CD8-positive, alpha-beta T cell (primary cell): ENCODE measurements at regions of chr2 and their contacts with region 1.

Region 1: GRCh38 chr2:127701193-127701650 is at the start of gene SFT2D3:
- DNase-seq: peak; percentile 80 to 95 (median 89)
- ATAC-seq: peak; percentile 72
- H3K4me3 ChIP-seq: peak within 1 kb of the TSS; percentile 75 to 98
- H3K4me3 Mint-ChIP-seq: peak within 1 kb of the TSS; percentile 93
- H3K27ac ChIP-seq: peak within 1 kb of the TSS; percentile 92 to 96
- H3K27ac Mint-ChIP-seq: peak within 1 kb of the TSS; percentile 99
- H3K4me1 ChIP-seq: peaks cover 39% of the 10 kb centered on the region
- H3K4me1 Mint-ChIP-seq: peaks cover 46% of the 10 kb centered on the region
- H3K27me3 ChIP-seq: no peaks in the 10 kb centered on the region
- H3K27me3 Mint-ChIP-seq: no peaks in the 10 kb centered on the region
- CTCF ChIP-seq: no peak
- total RNA-seq, gene SFT2D3: 8.2 to 8.5 TPM

Region 2: GRCh38 chr2:127081826-127082633 is 619.2 kb before region 1 on chr2:
- CTCF ChIA-PET with region 1: no interaction called
- POLR2A ChIA-PET with region 1: no interaction called
- intact Hi-C with region 1: loop called (anchors 5 to 10 kb)
- DNase-seq: peak; percentile 67 to 94 (median 82)
- ATAC-seq: peak; percentile 66
- H3K4me3 ChIP-seq: peak overlapping the region; percentile 84 to 94
- H3K4me3 Mint-ChIP-seq: peak overlapping the region; percentile 90
- H3K27ac ChIP-seq: peak overlapping the region; percentile 94 to 96
- H3K27ac Mint-ChIP-seq: peak overlapping the region; percentile 99
- H3K4me1 ChIP-seq: peaks cover 94% of the 10 kb centered on the region
- H3K4me1 Mint-ChIP-seq: peaks cover 85% of the 10 kb centered on the region
- H3K27me3 ChIP-seq: no peaks in the 10 kb centered on the region
- H3K27me3 Mint-ChIP-seq: no peaks in the 10 kb centered on the region
- CTCF ChIP-seq: no peak

Region 3: GRCh38 chr2:127293748-127294562 is 407.3 kb before region 1 on chr2 and contains the start of gene ERCC3:
- CTCF ChIA-PET with region 1: no interaction called
- POLR2A ChIA-PET with region 1: interaction called, 5 read pairs
- intact Hi-C with region 1: loop called (anchors 5 to 10 kb)
- DNase-seq: peak; percentile 56 to 90 (median 83)
- ATAC-seq: peak; percentile 91
- H3K4me3 ChIP-seq: peak within 1 kb of the TSS; percentile 75 to 91
- H3K4me3 Mint-ChIP-seq: peak within 1 kb of the TSS; percentile 94
- H3K27ac ChIP-seq: peak within 1 kb of the TSS; percentile 74 to 76
- H3K27ac Mint-ChIP-seq: peak within 1 kb of the TSS; percentile 91
- H3K4me1 ChIP-seq: peaks cover 13% of the 10 kb centered on the region
- H3K4me1 Mint-ChIP-seq: peaks cover 45% of the 10 kb centered on the region
- H3K27me3 ChIP-seq: no peaks in the 10 kb centered on the region
- H3K27me3 Mint-ChIP-seq: no peaks in the 10 kb centered on the region
- CTCF ChIP-seq: no peak
- total RNA-seq, gene ERCC3: 43.2 to 46.4 TPM

Region 4: GRCh38 chr2:127597984-127598380 is 103.2 kb before region 1 on chr2:
- CTCF ChIA-PET with region 1: no interaction called
- POLR2A ChIA-PET with region 1: no interaction called
- intact Hi-C with region 1: no loop called
- DNase-seq: no peak
- ATAC-seq: no peak
- H3K4me3 ChIP-seq: no peak overlapping the region
- H3K4me3 Mint-ChIP-seq: no peak overlapping the region
- H3K27ac ChIP-seq: no peak overlapping the region
- H3K27ac Mint-ChIP-seq: no peak overlapping the region
- H3K4me1 ChIP-seq: no peaks in the 10 kb centered on the region
- H3K4me1 Mint-ChIP-seq: no peaks in the 10 kb centered on the region
- H3K27me3 ChIP-seq: no peaks in the 10 kb centered on the region
- H3K27me3 Mint-ChIP-seq: no peaks in the 10 kb centered on the region
- CTCF ChIP-seq: no peak

Region 5: GRCh38 chr2:127637725-127638252 is 63.4 kb before region 1 on chr2:
- CTCF ChIA-PET with region 1: interaction called, 4 read pairs
- POLR2A ChIA-PET with region 1: interaction called, 20 read pairs
- intact Hi-C with region 1: loop called (anchors 2 kb)
- DNase-seq: no peak
- ATAC-seq: no peak
- H3K4me3 ChIP-seq: peak overlapping the region in 1 of 2 experiments; percentile 15
- H3K4me3 Mint-ChIP-seq: peak overlapping the region; percentile 43
- H3K27ac ChIP-seq: no peak overlapping the region
- H3K27ac Mint-ChIP-seq: peak overlapping the region; percentile 89
- H3K4me1 ChIP-seq: peaks cover 94% of the 10 kb centered on the region
- H3K4me1 Mint-ChIP-seq: peaks cover 71% of the 10 kb centered on the region
- H3K27me3 ChIP-seq: no peaks in the 10 kb centered on the region
- H3K27me3 Mint-ChIP-seq: no peaks in the 10 kb centered on the region
- CTCF ChIP-seq: no peak

Region 6: GRCh38 chr2:127857265-127857808 is 156.1 kb after region 1 on chr2:
- CTCF ChIA-PET with region 1: no interaction called
- POLR2A ChIA-PET with region 1: interaction called, 8 read pairs
- intact Hi-C with region 1: loop called (anchors 1 kb)
- DNase-seq: peak in 3 of 9 experiments; percentile 11 to 44 (median 22)
- ATAC-seq: no peak
- H3K4me3 ChIP-seq: peak overlapping the region; percentile 83 to 94
- H3K4me3 Mint-ChIP-seq: peak overlapping the region; percentile 90
- H3K27ac ChIP-seq: peak overlapping the region; percentile 76 to 82
- H3K27ac Mint-ChIP-seq: peak overlapping the region; percentile 85
- H3K4me1 ChIP-seq: peaks cover 28% of the 10 kb centered on the region
- H3K4me1 Mint-ChIP-seq: peaks cover 51% of the 10 kb centered on the region
- H3K27me3 ChIP-seq: no peaks in the 10 kb centered on the region
- H3K27me3 Mint-ChIP-seq: no peaks in the 10 kb centered on the region
- CTCF ChIP-seq: no peak

Region 7: GRCh38 chr2:128090945-128091725 is 389.9 kb after region 1 on chr2 and contains the start of gene UGGT1:
- CTCF ChIA-PET with region 1: no interaction called
- POLR2A ChIA-PET with region 1: interaction called, 4 read pairs
- intact Hi-C with region 1: loop called (anchors 1 kb)
- DNase-seq: peak; percentile 87 to 98 (median 94)
- ATAC-seq: peak; percentile 97
- H3K4me3 ChIP-seq: peak within 1 kb of the TSS; percentile 86 to 94
- H3K4me3 Mint-ChIP-seq: peak within 1 kb of the TSS; percentile 90
- H3K27ac ChIP-seq: peak within 1 kb of the TSS; percentile 60 to 89
- H3K27ac Mint-ChIP-seq: peak within 1 kb of the TSS; percentile 95
- H3K4me1 ChIP-seq: peaks cover 5% of the 10 kb centered on the region
- H3K4me1 Mint-ChIP-seq: peaks cover 49% of the 10 kb centered on the region
- H3K27me3 ChIP-seq: no peaks in the 10 kb centered on the region
- H3K27me3 Mint-ChIP-seq: no peaks in the 10 kb centered on the region
- CTCF ChIP-seq: no peak
- total RNA-seq, gene UGGT1: 25.6 to 25.9 TPM